Naive thymus-derived CD4-positive, alpha-beta T cell (primary cell): ENCODE measurements at regions of chr4 and their contacts with region 1.

Region 1: DNA sequence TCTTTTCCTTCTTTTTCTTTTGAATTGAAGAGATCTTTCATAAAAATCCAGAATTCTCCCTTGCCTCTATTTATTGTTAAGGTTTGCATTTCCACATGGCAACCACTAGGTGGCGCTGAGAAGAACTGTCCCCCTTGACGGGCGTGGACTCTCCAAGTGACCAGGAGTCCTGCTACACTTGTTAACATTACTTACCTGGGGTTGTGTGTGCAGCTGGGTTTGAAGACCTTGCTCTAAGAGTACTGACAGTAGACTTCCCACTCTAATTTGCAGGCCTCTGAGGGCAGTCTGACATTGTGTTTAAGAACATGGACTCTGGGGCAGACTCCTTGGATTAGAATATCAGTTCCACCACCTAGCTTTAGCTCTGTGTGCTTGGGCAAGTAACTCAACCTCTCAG is 52.8 kb downstream of the GPRIN3 start:
- DNase-seq: peak; percentile 23 to 51 (median 35)
- ATAC-seq: peak; percentile 85
- H3K4me3 ChIP-seq: no peak overlapping the region
- H3K4me3 Mint-ChIP-seq: peak overlapping the region in 3 of 10 donors; percentile 3 to 25 (median 6)
- H3K27ac ChIP-seq: no peak overlapping the region
- H3K27ac Mint-ChIP-seq: peak overlapping the region; percentile 15 to 85 (median 66)
- H3K4me1 ChIP-seq: peaks cover 15 to 16% of the 10 kb centered on the region in 2 donors
- H3K4me1 Mint-ChIP-seq: peaks cover 44 to 86% (median 74%) of the 10 kb centered on the region in 7 donors
- H3K27me3 ChIP-seq: no peaks in the 10 kb centered on the region
- H3K27me3 Mint-ChIP-seq: no peaks in the 10 kb centered on the region

Region 2: GRCh38 chr4:89242864-89243732 is 11.7 kb before region 1 on chr4:
- CTCF ChIA-PET with region 1: interaction called, 4 read pairs
- POLR2A ChIA-PET with region 1: no interaction called
- intact Hi-C with region 1: loop called in 1 of 2 experiments (anchors 1 kb)
- DNase-seq: peak in 7 of 9 donors; percentile 16 to 67 (median 35)
- ATAC-seq: peak; percentile 96
- H3K4me3 ChIP-seq: no peak overlapping the region
- H3K4me3 Mint-ChIP-seq: peak overlapping the region in 5 of 10 donors; percentile 9 to 73 (median 20)
- H3K27ac ChIP-seq: peak overlapping the region; percentile 39
- H3K27ac Mint-ChIP-seq: peak overlapping the region; percentile 44 to 94 (median 80)
- H3K4me1 ChIP-seq: peaks cover 13 to 40% of the 10 kb centered on the region in 2 donors
- H3K4me1 Mint-ChIP-seq: peaks cover 15 to 62% (median 46%) of the 10 kb centered on the region in 7 donors
- H3K27me3 ChIP-seq: no peaks in the 10 kb centered on the region
- H3K27me3 Mint-ChIP-seq: no peaks in the 10 kb centered on the region

Region 3: DNA sequence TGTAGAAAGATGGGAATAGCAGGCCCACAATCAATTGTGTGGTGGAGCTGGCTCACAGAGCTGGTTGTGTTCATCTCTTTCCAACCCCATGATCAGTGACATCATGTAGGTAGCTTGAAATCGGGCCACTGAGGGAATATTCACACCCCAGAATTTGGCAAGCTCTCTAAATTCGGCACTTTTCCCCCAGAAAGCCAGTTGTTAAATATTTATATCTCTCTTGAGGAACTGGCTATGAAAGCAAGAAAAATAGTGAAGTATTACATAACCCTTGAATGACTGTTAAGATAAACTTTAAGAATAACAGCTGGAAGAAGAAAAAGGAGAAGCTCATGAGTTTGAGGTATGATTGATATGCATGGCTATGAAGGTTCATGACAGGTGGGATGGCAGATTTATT is 13.8 kb after region 1 on chr4:
- CTCF ChIA-PET with region 1: interaction called, 10 read pairs
- POLR2A ChIA-PET with region 1: no interaction called
- intact Hi-C with region 1: loop called in 1 of 2 experiments (anchors 1 kb)
- DNase-seq: no peak
- ATAC-seq: no peak
- H3K4me3 ChIP-seq: no peak overlapping the region
- H3K4me3 Mint-ChIP-seq: no peak overlapping the region
- H3K27ac ChIP-seq: no peak overlapping the region
- H3K27ac Mint-ChIP-seq: peak overlapping the region in 3 of 9 donors; percentile 15 to 59 (median 25)
- H3K4me1 ChIP-seq: peaks cover 7 to 41% of the 10 kb centered on the region in 2 donors
- H3K4me1 Mint-ChIP-seq: peaks cover 36 to 80% (median 74%) of the 10 kb centered on the region in 7 donors
- H3K27me3 ChIP-seq: no peaks in the 10 kb centered on the region
- H3K27me3 Mint-ChIP-seq: no peaks in the 10 kb centered on the region

Region 4: DNA sequence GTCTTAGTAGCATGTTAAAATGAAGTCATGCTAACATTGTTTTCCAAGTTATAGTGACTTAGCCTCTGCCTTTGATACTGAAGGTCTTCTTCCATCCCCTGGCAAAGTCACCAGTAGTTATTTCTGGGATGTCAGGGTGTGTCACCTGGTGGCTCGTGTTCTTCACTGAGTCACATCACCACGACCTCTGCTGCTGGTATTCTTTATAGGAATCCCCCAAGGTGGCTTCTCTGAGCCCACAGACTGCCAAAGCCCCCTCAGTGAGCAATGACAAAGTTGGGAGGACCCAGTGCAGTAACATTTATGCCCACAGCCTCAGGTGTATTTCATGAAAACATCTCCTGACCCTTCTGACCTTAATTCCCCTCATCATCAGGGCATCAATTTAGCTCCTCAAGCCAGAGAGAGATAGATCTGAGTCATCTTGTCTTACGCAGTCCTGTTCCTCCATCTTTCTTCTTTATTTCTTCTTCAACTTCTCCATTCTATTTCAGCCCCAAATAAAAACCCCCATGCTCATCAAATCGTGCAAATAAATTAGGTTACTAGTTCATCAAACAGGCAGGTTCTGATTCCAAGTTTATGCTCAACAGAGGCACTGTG is 82.1 kb after region 1 on chr4:
- CTCF ChIA-PET with region 1: no interaction called
- POLR2A ChIA-PET with region 1: no interaction called
- intact Hi-C with region 1: loop called in 1 of 2 experiments (anchors 1 kb)
- DNase-seq: no peak
- ATAC-seq: no peak
- H3K4me3 ChIP-seq: no peak overlapping the region
- H3K4me3 Mint-ChIP-seq: peak overlapping the region in 5 of 10 donors; percentile 2 to 74 (median 9)
- H3K27ac ChIP-seq: no peak overlapping the region
- H3K27ac Mint-ChIP-seq: peak overlapping the region in 3 of 9 donors; percentile 5 to 70 (median 11)
- H3K4me1 ChIP-seq: peaks cover 0 to 19% of the 10 kb centered on the region in 2 donors
- H3K4me1 Mint-ChIP-seq: peaks cover 0 to 16% (median 9%) of the 10 kb centered on the region in 7 donors
- H3K27me3 ChIP-seq: no peaks in the 10 kb centered on the region
- H3K27me3 Mint-ChIP-seq: no peaks in the 10 kb centered on the region

Region 5: GRCh38 chr4:89434364-89434988 is 179.6 kb after region 1 on chr4:
- CTCF ChIA-PET with region 1: interaction called, 11 read pairs
- POLR2A ChIA-PET with region 1: interaction called, 5 read pairs
- intact Hi-C with region 1: loop called (anchors 1 kb)
- DNase-seq: peak in 6 of 9 donors; percentile 28 to 61 (median 45)
- ATAC-seq: peak; percentile 72
- H3K4me3 ChIP-seq: no peak overlapping the region
- H3K4me3 Mint-ChIP-seq: no peak overlapping the region
- H3K27ac ChIP-seq: no peak overlapping the region
- H3K27ac Mint-ChIP-seq: peak overlapping the region in 1 of 9 donors; percentile 14
- H3K4me1 ChIP-seq: no peaks in the 10 kb centered on the region
- H3K4me1 Mint-ChIP-seq: peaks cover 8 to 23% (median 13%) of the 10 kb centered on the region in 7 donors
- H3K27me3 ChIP-seq: no peaks in the 10 kb centered on the region
- H3K27me3 Mint-ChIP-seq: no peaks in the 10 kb centered on the region